ENCODE measurements at regions of chr6 and their contacts with region 1.

Region 1: DNA sequence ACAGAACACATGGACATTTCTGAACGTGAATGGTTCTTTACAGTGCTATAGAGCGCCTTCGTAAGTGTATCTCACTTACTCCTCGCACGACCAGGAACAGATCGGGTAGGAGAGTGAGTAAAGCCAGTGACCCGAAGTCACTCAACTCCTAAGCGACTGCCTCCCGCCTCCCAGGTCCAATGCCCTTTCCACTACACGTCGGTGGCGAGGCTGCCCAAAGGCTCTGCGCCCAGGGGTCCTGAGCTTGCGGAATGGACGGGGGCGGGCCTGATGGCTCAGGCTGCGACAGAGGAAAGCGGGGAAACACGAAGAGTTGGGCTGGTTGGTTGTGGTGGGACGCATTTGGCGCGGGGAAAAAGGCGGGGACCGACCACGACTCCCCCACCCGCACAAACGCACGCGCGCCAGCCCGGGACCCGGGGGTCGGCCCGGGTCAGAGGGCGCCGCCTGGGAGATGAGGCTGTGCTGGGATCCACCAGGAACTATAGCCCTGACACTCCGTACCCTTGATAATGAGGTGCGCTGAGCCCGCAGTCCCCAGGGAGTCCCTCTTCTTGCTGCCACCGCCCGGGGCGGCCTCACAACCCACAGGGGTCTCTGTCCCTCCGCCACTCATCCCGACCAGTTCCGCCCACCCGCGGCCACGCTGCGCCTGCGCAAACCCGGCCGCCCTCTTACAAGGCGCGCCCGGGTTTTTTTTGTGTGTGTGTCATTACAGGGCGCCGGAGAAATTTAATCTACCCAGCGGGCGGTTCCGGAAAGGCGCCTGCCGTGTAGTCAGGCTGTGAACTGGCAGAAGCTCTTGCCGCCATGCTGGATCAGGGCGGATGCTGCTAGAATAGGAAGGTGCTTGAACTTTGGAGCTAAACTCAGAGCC is at the start of gene BLOC1S5:
- DNase-seq: peak; percentile 92
- H3K4me3 ChIP-seq: peak within 1 kb of the TSS; percentile 81 to 97 (median 87)
- H3K27ac ChIP-seq: peak within 1 kb of the TSS; percentile 88
- H3K4me1 ChIP-seq: peaks cover 4% of the 10 kb centered on the region
- H3K27me3 ChIP-seq: no peaks in the 10 kb centered on the region
- CTCF ChIP-seq: peak in 1 of 2 donors; percentile 0
- total RNA-seq, gene BLOC1S5: 9.0 to 11.9 TPM

Region 2: GRCh38 chr6:7910654-7911344 is 153.2 kb before region 1 on chr6 and contains the start of gene TXNDC5:
- CTCF ChIA-PET with region 1: no interaction called
- dilution Hi-C with region 1: no loop called
- in situ Hi-C with region 1: no loop called
- intact Hi-C with region 1: loop called (anchors 2 kb)
- DNase-seq: peak; percentile 71
- H3K4me3 ChIP-seq: peak within 1 kb of the TSS; percentile 49 to 78 (median 74)
- H3K27ac ChIP-seq: peak within 1 kb of the TSS; percentile 42
- H3K4me1 ChIP-seq: peaks cover 17% of the 10 kb centered on the region
- H3K27me3 ChIP-seq: no peaks in the 10 kb centered on the region
- CTCF ChIP-seq: no peak
- total RNA-seq, gene TXNDC5: 109 to 170 TPM

Region 3: GRCh38 chr6:7974938-7975763 is 88.8 kb before region 1 on chr6:
- CTCF ChIA-PET with region 1: no interaction called
- dilution Hi-C with region 1: no loop called
- in situ Hi-C with region 1: no loop called
- intact Hi-C with region 1: no loop called
- DNase-seq: peak; percentile 75
- H3K4me3 ChIP-seq: peak overlapping the region in 1 of 3 experiments; percentile 14
- H3K27ac ChIP-seq: no peak overlapping the region
- H3K4me1 ChIP-seq: peaks cover 13% of the 10 kb centered on the region
- H3K27me3 ChIP-seq: no peaks in the 10 kb centered on the region
- CTCF ChIP-seq: no peak

Region 4: GRCh38 chr6:8131256-8131897 is 67.4 kb after region 1 on chr6:
- CTCF ChIA-PET with region 1: interaction called, 17 read pairs
- dilution Hi-C with region 1: no loop called
- in situ Hi-C with region 1: no loop called
- intact Hi-C with region 1: no loop called
- DNase-seq: peak; percentile 53
- H3K4me3 ChIP-seq: no peak overlapping the region
- H3K27ac ChIP-seq: no peak overlapping the region
- H3K4me1 ChIP-seq: no peaks in the 10 kb centered on the region
- H3K27me3 ChIP-seq: no peaks in the 10 kb centered on the region
- CTCF ChIP-seq: peak; percentile 44 to 72

Region 5: DNA sequence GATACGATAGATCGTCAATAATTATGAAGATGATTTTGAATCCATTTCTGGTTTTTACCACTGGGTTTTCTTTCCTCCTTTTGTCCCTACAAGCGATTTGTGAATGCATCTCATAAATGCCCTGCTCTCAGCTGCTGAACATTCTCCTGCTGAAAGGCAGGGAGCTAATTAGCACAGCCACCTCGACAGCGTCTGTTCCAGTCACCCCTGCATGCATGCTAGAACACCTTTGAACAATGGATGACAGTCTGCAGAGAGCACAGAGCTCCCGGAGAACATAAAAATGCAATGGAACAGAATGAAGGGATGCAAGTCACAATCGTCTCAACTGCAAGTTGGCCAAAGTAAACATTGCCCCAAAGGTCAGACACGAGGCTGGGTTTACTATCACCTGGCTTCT is 265.6 kb after region 1 on chr6:
- CTCF ChIA-PET with region 1: no interaction called
- dilution Hi-C with region 1: no loop called
- in situ Hi-C with region 1: no loop called
- intact Hi-C with region 1: no loop called
- DNase-seq: no peak
- H3K4me3 ChIP-seq: no peak overlapping the region
- H3K27ac ChIP-seq: no peak overlapping the region
- H3K4me1 ChIP-seq: peaks cover 9% of the 10 kb centered on the region
- H3K27me3 ChIP-seq: no peaks in the 10 kb centered on the region
- CTCF ChIP-seq: no peak